ENCODE measurements at regions of chr7 and their contacts with region 1.

Region 1: DNA sequence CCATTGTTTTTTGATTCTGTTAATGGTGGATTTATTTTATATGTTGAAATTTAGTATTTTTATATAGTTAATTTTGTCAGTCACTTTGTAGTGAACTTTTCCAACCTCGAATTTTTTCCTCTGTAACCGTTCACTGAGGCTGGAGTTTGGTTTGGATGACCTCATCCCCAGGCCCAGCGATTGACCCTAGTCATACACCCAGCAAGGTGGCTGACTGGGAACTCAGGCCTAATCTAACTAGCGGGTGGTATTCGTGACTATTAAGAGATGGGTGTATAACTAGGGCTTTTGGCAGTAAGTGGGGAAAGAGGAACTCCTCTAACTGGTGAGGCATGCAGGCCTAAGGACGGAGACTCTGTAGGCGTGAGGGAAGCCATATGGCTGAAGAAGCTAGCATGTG is 175.5 kb downstream of the SDK1 start:
- DNase-seq: no peak
- H3K4me3 ChIP-seq: no peak overlapping the region
- H3K27ac ChIP-seq: no peak overlapping the region
- H3K4me1 ChIP-seq: no peaks in the 10 kb centered on the region
- H3K27me3 ChIP-seq: no peaks in the 10 kb centered on the region
- CTCF ChIP-seq: no peak
- POLR2A ChIP-seq: no peak

Region 2: GRCh38 chr7:3588341-3588740 is 111.7 kb after region 1 on chr7:
- intact Hi-C with region 1: loop called (anchors 5 kb)
- DNase-seq: no peak
- H3K4me3 ChIP-seq: no peak overlapping the region
- H3K27ac ChIP-seq: no peak overlapping the region
- H3K4me1 ChIP-seq: peaks cover 8% of the 10 kb centered on the region
- H3K27me3 ChIP-seq: no peaks in the 10 kb centered on the region
- CTCF ChIP-seq: no peak
- POLR2A ChIP-seq: no peak